ENCODE measurements at regions of chr1 and their contacts with region 1.

Region 1: DNA sequence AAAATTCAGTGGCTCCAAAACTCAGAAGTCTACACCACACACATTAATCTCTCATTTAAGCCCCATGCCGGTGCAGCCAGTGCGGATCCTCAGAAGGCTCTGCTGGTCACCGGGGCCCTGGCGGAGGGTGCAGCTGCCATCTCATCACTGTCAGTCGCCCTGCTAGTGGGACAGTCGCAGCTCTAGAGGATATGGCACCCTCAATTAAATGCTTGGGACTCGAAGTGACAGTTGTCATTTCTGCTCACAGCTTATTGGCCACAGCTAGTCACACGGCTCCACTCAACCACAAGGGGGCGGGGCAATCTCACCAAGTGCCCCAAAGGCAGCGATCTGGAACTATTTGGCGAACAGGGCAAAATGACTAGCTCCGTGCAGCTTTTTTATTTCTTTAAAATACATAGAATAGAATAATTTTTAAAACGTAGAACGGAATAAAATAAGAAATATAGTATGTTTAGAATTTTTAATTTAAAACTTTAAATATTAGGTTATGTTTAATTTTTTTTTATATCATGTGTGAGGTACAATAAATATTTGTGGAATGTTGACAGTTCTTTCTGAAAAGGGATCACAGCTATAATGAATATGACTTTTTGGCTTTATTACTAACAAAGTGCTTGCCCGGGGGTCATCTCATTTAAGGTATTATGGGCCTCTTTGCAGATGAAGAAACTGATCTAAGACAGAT is 8.0 kb upstream of the MAN1C1 start:
- DNase-seq: peak; percentile 85
- ATAC-seq: peak; percentile 88
- H3K4me3 Mint-ChIP-seq: no peak overlapping the region
- H3K27ac Mint-ChIP-seq: no peak overlapping the region
- H3K4me1 Mint-ChIP-seq: peaks cover 4% of the 10 kb centered on the region
- H3K27me3 Mint-ChIP-seq: peaks cover 13% of the 10 kb centered on the region
- CTCF ChIP-seq: peak; percentile 47

Region 2: DNA sequence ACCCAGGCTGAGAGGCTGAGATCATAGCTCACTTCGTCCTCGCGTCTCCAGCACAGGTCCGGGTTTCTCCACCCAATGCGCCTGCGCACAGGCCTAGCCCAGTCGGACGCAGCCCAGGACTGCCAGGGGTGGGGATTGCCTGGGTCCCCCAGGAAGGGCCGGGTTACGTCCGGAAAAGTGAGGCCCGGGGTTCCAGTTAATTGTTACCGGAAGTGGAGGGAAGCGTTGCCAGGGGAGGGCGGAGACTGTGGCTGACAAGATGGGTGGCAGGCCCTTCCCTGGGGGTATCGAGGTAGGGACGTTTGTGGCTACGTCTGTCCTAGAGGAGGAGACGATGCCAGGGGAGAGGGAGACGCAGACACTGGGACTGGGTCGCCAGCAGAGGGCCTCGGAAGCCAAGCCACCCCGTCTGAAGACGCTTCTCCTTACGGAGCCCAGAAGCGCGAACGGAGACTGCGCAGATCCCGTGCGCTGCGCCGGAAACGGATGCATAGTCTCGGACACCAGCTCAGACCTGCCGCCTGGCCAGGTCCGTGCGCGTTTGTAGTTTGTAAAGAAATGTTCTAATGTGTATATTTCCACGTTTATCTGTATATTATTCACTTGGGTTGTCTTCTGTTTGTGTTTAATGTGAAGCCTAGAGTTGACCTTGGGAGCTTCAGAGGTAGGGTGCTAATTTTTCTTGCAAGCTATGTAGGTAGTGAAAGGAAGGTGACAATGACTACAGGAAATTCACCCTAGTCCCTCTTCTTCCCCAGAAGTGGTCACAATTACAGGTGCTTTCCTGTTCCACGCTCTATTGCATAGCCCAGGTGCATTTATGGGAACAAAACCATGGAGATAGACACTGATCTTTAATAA is 368.7 kb before region 1 on chr1:
- CTCF ChIA-PET with region 1: no interaction called
- POLR2A ChIA-PET with region 1: no interaction called
- DNase-seq: peak; percentile 87
- ATAC-seq: peak; percentile 93
- H3K4me3 Mint-ChIP-seq: peak overlapping the region; percentile 91
- H3K27ac Mint-ChIP-seq: peak overlapping the region; percentile 99
- H3K4me1 Mint-ChIP-seq: peaks cover 14% of the 10 kb centered on the region
- H3K27me3 Mint-ChIP-seq: no peaks in the 10 kb centered on the region; the same call in 1 of the 2 replicates
- CTCF ChIP-seq: no peak; the same call in 1 of the 2 replicates

Region 3: GRCh38 chr1:25631750-25632485 is 23.3 kb after region 1 on chr1:
- CTCF ChIA-PET with region 1: no interaction called
- POLR2A ChIA-PET with region 1: no interaction called
- DNase-seq: no peak
- ATAC-seq: no peak
- H3K4me3 Mint-ChIP-seq: no peak overlapping the region
- H3K27ac Mint-ChIP-seq: no peak overlapping the region
- H3K4me1 Mint-ChIP-seq: no peaks in the 10 kb centered on the region
- H3K27me3 Mint-ChIP-seq: no peaks in the 10 kb centered on the region; the same call in 1 of the 2 replicates
- CTCF ChIP-seq: no peak

Region 4: DNA sequence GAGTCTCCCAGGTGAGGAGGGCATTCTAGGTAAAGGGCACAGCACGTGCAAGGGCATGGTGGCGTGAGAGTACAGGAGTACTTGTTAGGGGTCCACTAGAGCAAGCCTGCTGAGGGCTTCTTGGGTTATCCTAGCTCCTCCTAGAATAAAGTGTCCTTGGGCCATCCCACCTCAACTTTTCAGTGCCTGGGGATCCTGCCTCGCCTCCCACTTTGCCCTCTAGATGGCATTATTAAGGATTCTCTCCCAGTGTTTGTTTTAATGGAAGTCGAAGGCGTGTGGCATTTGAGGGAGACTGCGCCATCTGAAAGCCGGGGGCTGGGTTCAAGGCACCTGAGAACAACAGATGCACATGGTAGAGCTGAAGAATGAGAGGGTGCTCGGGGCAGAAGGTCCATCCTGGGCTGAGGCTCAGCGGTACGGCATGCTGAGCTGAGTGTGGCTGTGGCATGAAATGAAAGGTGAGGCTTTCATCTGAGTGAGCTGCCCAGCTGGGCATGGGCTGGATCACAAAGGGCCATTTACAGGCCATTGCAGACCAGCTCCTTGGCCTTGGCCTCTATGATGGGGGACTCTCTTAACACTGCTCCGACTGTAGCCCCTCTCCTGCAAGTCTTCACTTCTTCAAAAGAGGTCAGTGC is 117.0 kb after region 1 on chr1:
- CTCF ChIA-PET with region 1: interaction called, 10 read pairs
- POLR2A ChIA-PET with region 1: no interaction called
- DNase-seq: no peak
- ATAC-seq: peak; percentile 12; the same call in 1 of the 2 replicates
- H3K4me3 Mint-ChIP-seq: no peak overlapping the region
- H3K27ac Mint-ChIP-seq: no peak overlapping the region
- H3K4me1 Mint-ChIP-seq: peaks cover 55% of the 10 kb centered on the region
- H3K27me3 Mint-ChIP-seq: no peaks in the 10 kb centered on the region
- CTCF ChIP-seq: no peak

Region 5: DNA sequence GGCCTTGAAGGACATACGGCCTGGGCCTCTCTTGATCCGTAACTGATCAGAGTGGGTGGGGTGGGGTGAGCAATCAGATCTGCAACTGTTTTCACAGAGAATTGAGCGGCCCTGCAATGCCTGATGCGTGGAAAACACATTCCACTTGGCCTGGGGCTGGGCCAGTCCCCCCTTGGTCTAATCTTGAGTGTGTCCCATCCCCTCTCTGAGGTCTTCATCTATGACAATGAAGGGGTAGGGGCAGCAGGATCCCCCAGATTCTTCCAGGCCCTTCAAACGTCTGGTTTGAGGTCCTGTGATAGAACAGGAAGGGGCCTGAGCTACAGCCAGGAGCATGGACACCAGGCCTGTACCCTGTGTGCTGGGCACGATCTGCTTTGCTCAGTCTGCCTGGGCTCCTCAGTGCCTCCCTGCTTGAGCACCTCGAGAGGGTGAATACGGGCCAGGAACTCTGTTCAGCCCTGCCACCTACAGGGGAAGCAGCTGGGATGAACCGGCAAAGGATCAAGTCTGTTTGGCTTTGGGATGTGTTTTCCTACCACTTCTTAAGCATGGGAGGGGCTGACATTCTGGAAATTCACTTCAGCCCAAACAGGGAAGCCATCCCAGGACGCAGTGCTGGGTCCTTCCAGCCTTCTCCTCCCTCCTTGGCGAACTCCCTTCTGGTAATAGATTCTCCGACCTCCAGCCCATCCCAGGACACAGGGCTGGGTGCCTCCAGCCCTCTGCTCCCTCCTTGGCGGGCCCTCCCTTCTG is 135.4 kb after region 1 on chr1:
- CTCF ChIA-PET with region 1: interaction called, 10 read pairs
- POLR2A ChIA-PET with region 1: no interaction called
- DNase-seq: peak; percentile 61
- ATAC-seq: peak; percentile 86
- H3K4me3 Mint-ChIP-seq: no peak overlapping the region
- H3K27ac Mint-ChIP-seq: peak overlapping the region; percentile 89; the same call in 1 of the 2 replicates
- H3K4me1 Mint-ChIP-seq: peaks cover 36% of the 10 kb centered on the region
- H3K27me3 Mint-ChIP-seq: no peaks in the 10 kb centered on the region
- CTCF ChIP-seq: no peak

Region 6: DNA sequence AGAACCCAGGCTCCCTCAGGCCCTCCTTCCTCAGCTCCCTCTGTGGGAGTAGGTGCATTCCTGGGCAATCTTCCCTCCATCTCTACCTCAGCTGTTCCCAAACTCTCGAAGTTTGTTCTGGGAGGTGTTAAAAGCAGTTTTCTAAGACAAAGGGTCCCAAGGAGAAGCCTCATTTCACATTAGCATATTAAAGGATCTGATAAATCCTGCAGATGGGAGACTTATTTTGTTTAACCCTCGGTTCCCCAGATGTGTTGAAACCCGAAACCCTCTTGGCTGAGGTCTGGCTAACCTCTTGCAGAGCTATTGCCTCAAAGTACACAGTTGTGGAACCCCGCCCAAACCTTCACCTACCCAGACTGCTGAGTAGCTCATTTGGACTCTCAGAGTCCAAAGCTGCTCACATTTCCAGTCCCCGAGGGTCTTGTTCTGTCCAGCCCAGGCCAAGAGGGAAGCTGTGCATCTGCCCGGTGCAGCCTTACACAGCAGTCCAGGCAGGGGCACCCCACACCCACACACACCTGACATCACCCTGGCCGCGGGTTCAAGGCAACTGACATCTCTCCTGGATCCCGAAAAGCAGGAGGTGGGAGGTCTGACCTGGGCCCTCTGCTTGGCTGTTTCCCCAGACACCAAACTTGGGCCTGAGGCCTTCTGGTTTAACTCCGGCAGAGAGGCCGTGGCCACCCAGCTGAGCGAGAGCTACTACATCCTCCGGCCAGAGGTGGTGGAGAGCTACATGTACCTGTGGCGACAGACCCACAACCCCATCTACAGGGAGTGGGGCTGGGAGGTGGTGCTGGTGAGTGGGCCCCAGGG is 171.9 kb after region 1 on chr1:
- CTCF ChIA-PET with region 1: interaction called, 11 read pairs
- POLR2A ChIA-PET with region 1: no interaction called
- DNase-seq: peak; percentile 50
- ATAC-seq: peak; percentile 84
- H3K4me3 Mint-ChIP-seq: no peak overlapping the region
- H3K27ac Mint-ChIP-seq: peak overlapping the region; percentile 72
- H3K4me1 Mint-ChIP-seq: peaks cover 62% of the 10 kb centered on the region
- H3K27me3 Mint-ChIP-seq: peaks cover 5% of the 10 kb centered on the region; the same call in 1 of the 2 replicates
- CTCF ChIP-seq: no peak

Region 7: DNA sequence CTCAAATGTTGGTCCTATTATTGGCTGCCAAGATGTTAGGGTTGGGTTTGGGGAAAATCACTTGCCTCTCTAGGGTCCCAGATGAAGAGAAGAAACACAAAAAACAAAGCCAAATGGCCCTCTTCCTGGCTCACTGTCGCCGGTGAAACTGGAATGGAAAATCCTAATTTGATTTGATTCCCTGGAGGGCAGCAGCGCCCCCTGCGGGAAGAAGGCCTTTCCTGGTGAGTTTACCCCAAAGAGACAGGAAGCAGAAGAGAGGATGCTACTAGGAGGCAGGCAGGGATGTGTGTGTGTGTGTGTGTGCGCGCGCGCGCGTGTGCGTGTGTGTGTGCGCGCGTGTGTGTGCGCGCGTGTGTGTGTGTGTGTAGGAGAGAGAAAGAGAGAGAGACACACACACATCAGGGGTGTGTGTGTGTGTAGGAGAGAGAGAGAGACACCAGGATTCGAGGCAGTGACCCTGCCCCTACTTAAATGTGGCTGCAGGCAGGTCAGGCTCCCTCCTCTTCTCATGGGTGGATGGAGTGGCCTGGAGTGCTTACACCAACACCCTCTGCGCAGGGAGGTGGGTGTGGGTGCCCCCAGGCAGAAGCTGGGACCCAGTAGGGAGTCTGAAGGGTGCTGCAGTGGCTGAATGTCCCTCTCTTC is 188.3 kb after region 1 on chr1:
- CTCF ChIA-PET with region 1: interaction called, 25 read pairs
- POLR2A ChIA-PET with region 1: interaction called, 3 read pairs
- DNase-seq: peak; percentile 95
- ATAC-seq: peak; percentile 27
- H3K4me3 Mint-ChIP-seq: no peak overlapping the region; the same call in 1 of the 2 replicates
- H3K27ac Mint-ChIP-seq: peak overlapping the region; percentile 29; the same call in 1 of the 2 replicates
- H3K4me1 Mint-ChIP-seq: peaks cover 30% of the 10 kb centered on the region
- H3K27me3 Mint-ChIP-seq: peaks cover 4% of the 10 kb centered on the region
- CTCF ChIP-seq: peak; percentile 77

Region 8: DNA sequence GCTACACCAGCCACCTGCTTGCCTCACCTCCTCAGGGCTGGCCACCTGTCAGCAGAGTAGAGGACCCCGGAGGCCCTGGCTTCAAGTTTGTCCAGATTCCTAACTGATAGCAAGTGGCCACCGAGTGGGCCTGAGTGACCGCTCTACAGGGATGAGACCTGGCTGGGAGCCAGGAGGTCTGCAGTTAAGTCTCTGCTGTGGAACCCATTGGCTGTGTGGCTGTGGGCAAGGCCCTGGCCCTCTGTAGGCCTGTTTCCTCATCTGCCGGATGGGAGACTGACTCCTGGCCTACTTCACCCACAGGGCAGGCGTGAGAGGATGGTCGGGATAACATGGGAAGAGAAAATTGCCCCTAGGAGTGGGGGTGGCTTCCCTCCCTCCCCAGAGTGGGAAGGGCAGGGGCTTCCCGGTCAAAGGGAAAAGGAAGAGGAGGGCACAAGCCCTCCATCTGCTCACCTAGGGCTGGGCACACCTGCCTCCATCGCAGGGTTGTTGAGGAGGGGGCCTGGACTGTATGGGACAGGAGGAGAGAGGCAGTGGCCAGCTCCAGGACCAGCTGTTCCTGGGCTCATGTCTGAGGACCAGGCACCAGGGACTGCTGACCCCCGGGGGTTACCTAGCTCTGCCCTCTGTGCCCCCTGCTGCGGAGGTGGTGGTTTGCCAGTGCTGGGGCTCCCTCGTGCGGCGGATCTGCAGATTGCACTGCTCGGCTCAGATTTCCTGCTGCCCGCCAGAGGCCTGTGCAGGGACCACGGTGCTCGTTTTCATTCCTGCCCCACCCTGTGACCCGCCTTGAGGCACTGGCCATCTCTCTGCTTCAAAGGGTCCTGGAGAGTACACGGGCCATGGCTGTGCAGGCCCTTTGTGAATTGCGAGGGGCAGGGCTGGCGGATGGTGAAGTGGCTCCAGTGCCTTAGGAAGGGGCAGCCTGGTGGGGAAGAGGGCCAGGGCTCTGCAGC is 202.0 kb after region 1 on chr1:
- CTCF ChIA-PET with region 1: interaction called, 45 read pairs
- POLR2A ChIA-PET with region 1: no interaction called
- DNase-seq: peak; percentile 96
- ATAC-seq: peak; percentile 81
- H3K4me3 Mint-ChIP-seq: no peak overlapping the region
- H3K27ac Mint-ChIP-seq: no peak overlapping the region
- H3K4me1 Mint-ChIP-seq: 0 out of 2 replicates have a peak, but pooled peaks cover 3% of the 10 kb centered on the region
- H3K27me3 Mint-ChIP-seq: no peaks in the 10 kb centered on the region
- CTCF ChIP-seq: peak; percentile 90